ENCODE measurements at regions of chr2 and their contacts with region 1.

Region 1: GRCh38 chr2:170409164-170409535 is 231.2 kb downstream of the MYO3B start:
- DNase-seq: peak; percentile 77 to 83 (median 80)
- H3K4me3 ChIP-seq: peak overlapping the region in 3 of 7 experiments; percentile 40 to 66 (median 64)
- H3K27ac ChIP-seq: no peak overlapping the region
- H3K4me1 ChIP-seq: peaks cover 0 to 10% (median 4%) of the 10 kb centered on the region in 4 experiments
- H3K27me3 ChIP-seq: peaks cover 0 to 3% (median 0%) of the 10 kb centered on the region in 5 experiments

Region 2: DNA sequence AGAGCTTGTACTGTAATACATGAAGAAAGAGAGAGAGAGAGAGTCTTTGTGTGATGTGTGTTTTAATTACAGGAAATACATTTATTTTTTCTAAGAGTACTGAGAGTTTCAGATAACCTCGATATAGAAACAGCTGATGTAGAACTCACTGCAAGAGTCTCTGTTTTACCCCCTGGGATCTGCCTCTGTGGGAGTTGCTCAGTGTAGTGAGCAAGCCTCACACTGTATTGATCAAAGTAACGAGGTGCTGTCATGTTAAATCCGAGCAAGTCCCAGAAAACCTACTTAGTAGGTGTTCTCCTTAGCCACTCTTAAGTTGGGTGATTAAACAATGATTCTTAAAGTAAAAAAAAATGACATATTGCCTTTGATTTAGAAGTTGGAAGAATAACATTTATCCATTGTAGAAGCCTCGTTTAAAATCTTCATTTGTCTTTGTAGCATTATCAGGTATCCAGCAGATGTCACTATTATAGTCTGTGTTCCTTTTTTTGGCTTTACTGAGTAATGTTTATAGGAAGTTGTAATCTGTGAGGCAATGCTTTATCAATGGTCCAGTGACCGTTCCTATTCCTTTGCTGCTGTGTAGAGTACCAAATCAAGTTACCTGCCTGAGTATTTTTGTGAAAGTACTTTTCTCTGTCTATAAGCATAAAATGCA is 12.2 kb before region 1 on chr2:
- CTCF ChIA-PET with region 1: interaction called, 30 read pairs
- POLR2A ChIA-PET with region 1: no interaction called
- DNase-seq: peak; percentile 22 to 58 (median 41)
- H3K4me3 ChIP-seq: no peak overlapping the region
- H3K27ac ChIP-seq: no peak overlapping the region
- H3K4me1 ChIP-seq: peaks cover 0 to 23% (median 3%) of the 10 kb centered on the region in 4 experiments
- H3K27me3 ChIP-seq: no peaks in the 10 kb centered on the region

Region 3: GRCh38 chr2:170420961-170421687 is 12.0 kb after region 1 on chr2:
- CTCF ChIA-PET with region 1: interaction called, 12 read pairs
- POLR2A ChIA-PET with region 1: no interaction called
- DNase-seq: peak in 2 of 3 donors; percentile 26 to 27
- H3K4me3 ChIP-seq: no peak overlapping the region
- H3K27ac ChIP-seq: no peak overlapping the region
- H3K4me1 ChIP-seq: no peaks in the 10 kb centered on the region
- H3K27me3 ChIP-seq: peaks cover 0 to 11% (median 8%) of the 10 kb centered on the region in 5 experiments